ENCODE measurements at regions of chr7 and their contacts with region 1.

Region 1: GRCh38 chr7:50293509-50294179 is 10.9 kb upstream of the IKZF1 start:
- DNase-seq: no peak
- ATAC-seq: no peak
- H3K4me3 Mint-ChIP-seq: no peak overlapping the region
- H3K27ac Mint-ChIP-seq: peak overlapping the region; percentile 25
- H3K4me1 Mint-ChIP-seq: peaks cover 45% of the 10 kb centered on the region
- H3K27me3 Mint-ChIP-seq: no peaks in the 10 kb centered on the region
- CTCF ChIP-seq: no peak

Region 2: DNA sequence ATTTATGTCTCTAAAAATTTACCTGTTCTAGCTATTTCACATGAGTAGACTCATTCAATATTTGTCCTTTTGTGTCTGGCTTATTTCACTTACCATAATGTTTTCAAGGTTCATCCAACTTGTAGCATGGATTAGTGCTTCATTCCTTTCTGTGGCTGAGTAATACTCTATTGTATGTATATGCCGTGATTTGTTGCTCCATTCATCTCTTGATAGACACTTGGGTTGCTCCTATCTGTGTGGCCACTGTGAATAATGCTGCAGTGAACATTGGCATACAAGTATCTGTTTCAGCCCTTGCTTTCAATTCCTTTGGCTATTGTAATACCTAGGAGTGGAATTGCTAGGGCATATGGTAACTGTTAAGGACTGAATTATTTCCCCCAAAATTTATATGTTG is 433.4 kb before region 1 on chr7:
- CTCF ChIA-PET with region 1: no interaction called
- POLR2A ChIA-PET with region 1: no interaction called
- intact Hi-C with region 1: no loop called
- DNase-seq: no peak
- ATAC-seq: no peak
- H3K4me3 Mint-ChIP-seq: no peak overlapping the region
- H3K27ac Mint-ChIP-seq: no peak overlapping the region
- H3K4me1 Mint-ChIP-seq: no peaks in the 10 kb centered on the region
- H3K27me3 Mint-ChIP-seq: no peaks in the 10 kb centered on the region
- CTCF ChIP-seq: no peak

Region 3: GRCh38 chr7:50182759-50183158 is 110.9 kb before region 1 on chr7:
- CTCF ChIA-PET with region 1: no interaction called
- POLR2A ChIA-PET with region 1: no interaction called
- intact Hi-C with region 1: no loop called
- DNase-seq: no peak
- ATAC-seq: no peak
- H3K4me3 Mint-ChIP-seq: no peak overlapping the region
- H3K27ac Mint-ChIP-seq: no peak overlapping the region
- H3K4me1 Mint-ChIP-seq: peaks cover 7% of the 10 kb centered on the region
- H3K27me3 Mint-ChIP-seq: peaks cover 1% of the 10 kb centered on the region
- CTCF ChIP-seq: no peak

Region 4: GRCh38 chr7:50272808-50273207 is 20.8 kb before region 1 on chr7:
- CTCF ChIA-PET with region 1: interaction called, 24 read pairs
- POLR2A ChIA-PET with region 1: interaction called, 5 read pairs
- intact Hi-C with region 1: no loop called
- DNase-seq: no peak
- ATAC-seq: no peak
- H3K4me3 Mint-ChIP-seq: no peak overlapping the region
- H3K27ac Mint-ChIP-seq: no peak overlapping the region
- H3K4me1 Mint-ChIP-seq: peaks cover 77% of the 10 kb centered on the region
- H3K27me3 Mint-ChIP-seq: no peaks in the 10 kb centered on the region
- CTCF ChIP-seq: no peak

Region 5: DNA sequence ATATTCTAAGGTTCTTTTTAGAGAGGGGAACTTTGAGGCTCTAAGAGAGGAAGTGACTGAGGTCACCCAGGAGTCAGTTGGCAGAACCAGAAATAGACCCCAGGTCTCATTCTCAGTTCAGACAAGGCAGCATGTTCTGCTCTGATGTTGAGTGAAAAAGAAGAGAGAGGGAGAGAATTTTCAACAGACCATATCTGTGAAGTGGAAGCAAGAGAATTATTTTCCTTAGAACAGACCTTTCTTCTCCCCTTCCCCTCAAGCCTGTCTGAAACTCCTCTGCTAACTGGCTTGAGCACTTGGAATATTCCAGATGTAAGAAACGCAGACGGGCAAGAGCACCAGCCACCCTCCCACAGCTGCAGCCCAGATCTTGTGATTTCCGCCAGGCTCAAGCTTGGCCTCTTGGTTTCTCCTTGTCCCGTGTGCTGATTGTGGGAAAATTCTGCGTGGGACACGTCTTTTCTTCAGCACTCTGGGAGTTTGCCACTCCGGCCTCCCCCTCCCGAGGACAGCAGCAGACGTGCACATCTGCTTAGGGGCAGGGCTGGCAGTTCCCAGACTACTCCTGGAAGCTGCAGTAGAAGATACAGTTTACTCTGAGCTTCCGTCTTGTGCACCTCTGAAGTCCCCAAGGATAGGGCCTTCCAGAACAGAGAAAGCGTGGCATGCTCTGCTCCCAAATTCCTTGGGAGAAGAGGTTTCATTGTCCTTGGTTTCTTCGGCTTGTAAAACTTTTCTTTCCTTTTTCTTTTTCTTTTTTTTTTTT is 11.8 kb before region 1 on chr7:
- CTCF ChIA-PET with region 1: interaction called, 10 read pairs
- POLR2A ChIA-PET with region 1: interaction called, 12 read pairs
- intact Hi-C with region 1: no loop called
- DNase-seq: peak; percentile 45
- ATAC-seq: peak; percentile 78
- H3K4me3 Mint-ChIP-seq: peak overlapping the region; percentile 63
- H3K27ac Mint-ChIP-seq: peak overlapping the region; percentile 89
- H3K4me1 Mint-ChIP-seq: peaks cover 63% of the 10 kb centered on the region
- H3K27me3 Mint-ChIP-seq: no peaks in the 10 kb centered on the region
- CTCF ChIP-seq: no peak